ENCODE measurements at regions of chr16 and their contacts with region 1.

Region 1: DNA sequence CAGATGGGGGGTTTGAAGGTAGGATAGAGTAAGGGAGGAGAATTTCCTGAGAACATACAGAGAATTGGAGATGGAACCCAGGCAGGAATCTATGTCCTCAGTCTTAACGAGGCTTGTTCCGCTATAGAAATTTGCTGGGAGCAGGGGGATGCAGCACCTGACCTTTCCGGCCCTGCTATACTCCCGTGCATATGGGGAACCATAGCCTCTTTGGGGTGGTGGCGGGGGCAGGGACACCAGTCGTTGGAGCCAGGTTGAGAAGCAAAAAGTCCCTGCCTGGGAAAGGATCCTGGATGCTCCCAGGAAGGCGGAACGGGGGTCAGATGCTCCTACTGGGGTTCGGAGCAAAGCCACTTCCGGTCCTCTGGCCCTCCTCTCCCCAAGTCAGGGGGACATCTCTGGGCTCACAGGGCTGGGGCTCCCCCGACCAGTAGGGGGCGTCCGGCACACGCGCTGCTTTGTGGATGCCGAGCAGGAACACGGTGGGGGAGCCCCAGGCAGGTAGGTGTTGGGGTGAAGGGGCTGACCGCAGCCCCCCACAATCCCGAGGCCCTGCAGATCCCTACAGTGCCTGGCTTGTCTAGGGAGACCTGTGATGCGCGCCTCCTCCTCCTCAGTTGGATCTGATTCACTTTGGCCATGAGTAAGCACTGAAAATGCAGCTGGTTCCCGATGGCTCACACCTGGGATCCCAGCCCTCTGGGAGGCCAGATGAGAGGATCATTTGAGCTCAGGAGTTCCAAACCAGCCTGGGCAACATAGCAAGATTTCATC is 15.5 kb upstream of the TFAP4 start:
- DNase-seq: peak; percentile 56 to 91 (median 84)
- ATAC-seq: peak; percentile 99
- H3K4me3 ChIP-seq: no peak overlapping the region
- H3K4me3 Mint-ChIP-seq: no peak overlapping the region
- H3K27ac ChIP-seq: no peak overlapping the region
- H3K27ac Mint-ChIP-seq: no peak overlapping the region
- H3K4me1 ChIP-seq: peaks cover 8% of the 10 kb centered on the region
- H3K4me1 Mint-ChIP-seq: peaks cover 13% of the 10 kb centered on the region
- H3K27me3 ChIP-seq: peaks cover 0 to 3% of the 10 kb centered on the region in 2 experiments
- H3K27me3 Mint-ChIP-seq: peaks cover 12% of the 10 kb centered on the region
- CTCF ChIP-seq: peak; percentile 95

Region 2: GRCh38 chr16:4277987-4278513 is 10.3 kb before region 1 on chr16:
- CTCF ChIA-PET with region 1: interaction called, 12 read pairs
- POLR2A ChIA-PET with region 1: interaction called, 6 read pairs
- intact Hi-C with region 1: loop called in 1 of 2 experiments (anchors 2 kb)
- DNase-seq: no peak
- ATAC-seq: no peak
- H3K4me3 ChIP-seq: no peak overlapping the region
- H3K4me3 Mint-ChIP-seq: no peak overlapping the region
- H3K27ac ChIP-seq: no peak overlapping the region
- H3K27ac Mint-ChIP-seq: no peak overlapping the region
- H3K4me1 ChIP-seq: no peaks in the 10 kb centered on the region
- H3K4me1 Mint-ChIP-seq: peaks cover 5% of the 10 kb centered on the region
- H3K27me3 ChIP-seq: no peaks in the 10 kb centered on the region
- H3K27me3 Mint-ChIP-seq: no peaks in the 10 kb centered on the region
- CTCF ChIP-seq: no peak

Region 3: DNA sequence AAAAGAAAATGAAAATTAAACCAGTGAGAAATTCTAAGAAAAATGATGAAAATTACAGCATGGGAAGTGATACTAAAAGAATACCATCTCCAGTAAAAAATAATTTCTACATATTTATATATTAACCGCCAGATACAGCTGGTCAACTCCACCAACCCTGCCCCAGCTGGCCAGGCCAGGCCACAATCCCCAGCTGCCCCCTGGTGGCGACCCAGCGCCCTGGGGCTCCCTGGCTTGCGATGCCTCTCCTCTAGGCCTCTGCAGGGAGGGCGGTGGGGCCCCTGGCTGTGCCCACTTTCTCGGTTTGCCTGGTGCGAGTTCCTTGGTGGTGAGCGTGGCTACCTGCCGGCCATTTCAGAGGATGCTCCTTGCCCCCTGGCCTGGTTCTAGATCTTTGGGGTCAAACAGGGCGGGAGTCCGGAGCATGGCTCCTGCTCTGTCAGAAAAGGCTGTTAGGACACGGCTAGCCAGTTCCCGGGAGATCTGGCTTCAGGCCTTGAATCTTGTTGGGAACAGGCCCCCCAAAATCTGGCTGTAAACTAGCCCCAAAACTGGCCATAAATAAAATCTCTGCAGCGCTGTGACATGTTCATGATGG is 42.0 kb after region 1 on chr16:
- CTCF ChIA-PET with region 1: interaction called, 169 read pairs
- POLR2A ChIA-PET with region 1: interaction called, 3 read pairs
- intact Hi-C with region 1: loop called (anchors 1 kb)
- DNase-seq: peak; percentile 49 to 84 (median 75)
- ATAC-seq: peak; percentile 68
- H3K4me3 ChIP-seq: no peak overlapping the region
- H3K4me3 Mint-ChIP-seq: no peak overlapping the region
- H3K27ac ChIP-seq: no peak overlapping the region
- H3K27ac Mint-ChIP-seq: no peak overlapping the region
- H3K4me1 ChIP-seq: peaks cover 14% of the 10 kb centered on the region
- H3K4me1 Mint-ChIP-seq: peaks cover 5% of the 10 kb centered on the region
- H3K27me3 ChIP-seq: no peaks in the 10 kb centered on the region
- H3K27me3 Mint-ChIP-seq: no peaks in the 10 kb centered on the region
- CTCF ChIP-seq: peak; percentile 91

Region 4: GRCh38 chr16:4402439-4403132 is 114.3 kb after region 1 on chr16:
- CTCF ChIA-PET with region 1: interaction called, 13 read pairs
- POLR2A ChIA-PET with region 1: no interaction called
- intact Hi-C with region 1: loop called (anchors 1 to 2 kb)
- DNase-seq: peak in 8 of 9 experiments; percentile 50 to 83 (median 68)
- ATAC-seq: peak; percentile 37
- H3K4me3 ChIP-seq: no peak overlapping the region
- H3K4me3 Mint-ChIP-seq: no peak overlapping the region
- H3K27ac ChIP-seq: no peak overlapping the region
- H3K27ac Mint-ChIP-seq: no peak overlapping the region
- H3K4me1 ChIP-seq: no peaks in the 10 kb centered on the region
- H3K4me1 Mint-ChIP-seq: peaks cover 19% of the 10 kb centered on the region
- H3K27me3 ChIP-seq: no peaks in the 10 kb centered on the region
- H3K27me3 Mint-ChIP-seq: no peaks in the 10 kb centered on the region
- CTCF ChIP-seq: peak; percentile 71

Region 5: GRCh38 chr16:4435337-4436067 is 147.2 kb after region 1 on chr16:
- CTCF ChIA-PET with region 1: no interaction called
- POLR2A ChIA-PET with region 1: no interaction called
- intact Hi-C with region 1: no loop called
- DNase-seq: no peak
- ATAC-seq: no peak
- H3K4me3 ChIP-seq: no peak overlapping the region
- H3K4me3 Mint-ChIP-seq: no peak overlapping the region
- H3K27ac ChIP-seq: no peak overlapping the region
- H3K27ac Mint-ChIP-seq: peak overlapping the region; percentile 41
- H3K4me1 ChIP-seq: no peaks in the 10 kb centered on the region
- H3K4me1 Mint-ChIP-seq: peaks cover 21% of the 10 kb centered on the region
- H3K27me3 ChIP-seq: no peaks in the 10 kb centered on the region
- H3K27me3 Mint-ChIP-seq: no peaks in the 10 kb centered on the region
- CTCF ChIP-seq: no peak

Region 6: GRCh38 chr16:4538350-4539235 is 250.3 kb after region 1 on chr16 and contains the start of gene CDIP1:
- CTCF ChIA-PET with region 1: no interaction called
- POLR2A ChIA-PET with region 1: no interaction called
- intact Hi-C with region 1: no loop called
- DNase-seq: peak; percentile 88 to 98 (median 94)
- ATAC-seq: peak; percentile 86
- H3K4me3 ChIP-seq: peak within 1 kb of the TSS; percentile 71
- H3K4me3 Mint-ChIP-seq: peak within 1 kb of the TSS; percentile 80
- H3K27ac ChIP-seq: peak within 1 kb of the TSS; percentile 86 to 90
- H3K27ac Mint-ChIP-seq: peak within 1 kb of the TSS; percentile 92
- H3K4me1 ChIP-seq: peaks cover 45% of the 10 kb centered on the region
- H3K4me1 Mint-ChIP-seq: peaks cover 39% of the 10 kb centered on the region
- H3K27me3 ChIP-seq: no peaks in the 10 kb centered on the region
- H3K27me3 Mint-ChIP-seq: no peaks in the 10 kb centered on the region
- CTCF ChIP-seq: no peak
- total RNA-seq, gene CDIP1: 21.7 to 25.0 TPM